ENCODE measurements at regions of chr3 and their contacts with region 1.

Region 1: DNA sequence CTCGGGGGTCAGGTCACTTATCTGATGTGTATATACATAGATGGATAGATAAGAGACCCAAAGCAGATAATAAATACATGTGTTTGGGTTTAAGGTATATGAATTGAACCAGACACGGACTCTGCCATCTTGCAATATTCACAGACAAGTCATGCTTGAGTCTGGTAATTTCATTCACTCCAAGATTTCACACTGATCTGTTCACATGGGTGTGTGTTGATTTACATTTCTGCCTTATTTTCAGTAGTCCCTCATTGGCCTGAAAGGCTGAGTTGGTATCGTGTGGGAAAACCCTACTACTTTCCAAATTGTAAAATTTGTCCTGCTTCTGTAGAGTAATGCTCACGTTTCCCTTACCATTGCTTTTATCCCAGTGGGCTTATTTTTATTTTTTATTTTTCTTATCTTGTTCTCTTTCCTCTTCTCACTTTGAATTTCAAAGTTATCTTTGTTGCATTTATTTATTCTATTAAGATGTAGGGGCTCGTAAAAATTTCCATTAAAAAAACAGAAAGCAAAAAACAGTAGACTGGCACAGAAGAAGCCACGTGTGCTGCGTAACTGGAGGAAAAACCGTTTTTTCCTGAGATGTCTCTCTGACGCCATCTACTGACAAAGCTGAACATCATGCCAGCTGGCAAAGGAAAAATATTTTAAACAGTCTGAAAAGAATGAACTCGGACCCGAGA is 10.8 kb upstream of the MFSD1 start:
- DNase-seq: no peak
- H3K4me3 ChIP-seq: peak overlapping the region in 3 of 4 donors; percentile 5 to 20 (median 9)
- H3K27ac ChIP-seq: no peak overlapping the region
- H3K4me1 ChIP-seq: peaks cover 0 to 6% (median 2%) of the 10 kb centered on the region in 4 donors
- H3K27me3 ChIP-seq: no peaks in the 10 kb centered on the region
- CTCF ChIP-seq: peak; percentile 47 to 80 (median 54)
- EP300 ChIP-seq: no peak
- POLR2A ChIP-seq: no peak

Region 2: GRCh38 chr3:158659454-158660237 is 131.4 kb before region 1 on chr3:
- intact Hi-C with region 1: loop called (anchors 5 kb)
- DNase-seq: peak; percentile 66
- H3K4me3 ChIP-seq: no peak overlapping the region
- H3K27ac ChIP-seq: peak overlapping the region in 1 of 4 donors; percentile 23
- H3K4me1 ChIP-seq: no peaks in the 10 kb centered on the region
- H3K27me3 ChIP-seq: no peaks in the 10 kb centered on the region
- CTCF ChIP-seq: peak; percentile 21 to 60 (median 42)
- EP300 ChIP-seq: no peak
- POLR2A ChIP-seq: no peak

Region 3: DNA sequence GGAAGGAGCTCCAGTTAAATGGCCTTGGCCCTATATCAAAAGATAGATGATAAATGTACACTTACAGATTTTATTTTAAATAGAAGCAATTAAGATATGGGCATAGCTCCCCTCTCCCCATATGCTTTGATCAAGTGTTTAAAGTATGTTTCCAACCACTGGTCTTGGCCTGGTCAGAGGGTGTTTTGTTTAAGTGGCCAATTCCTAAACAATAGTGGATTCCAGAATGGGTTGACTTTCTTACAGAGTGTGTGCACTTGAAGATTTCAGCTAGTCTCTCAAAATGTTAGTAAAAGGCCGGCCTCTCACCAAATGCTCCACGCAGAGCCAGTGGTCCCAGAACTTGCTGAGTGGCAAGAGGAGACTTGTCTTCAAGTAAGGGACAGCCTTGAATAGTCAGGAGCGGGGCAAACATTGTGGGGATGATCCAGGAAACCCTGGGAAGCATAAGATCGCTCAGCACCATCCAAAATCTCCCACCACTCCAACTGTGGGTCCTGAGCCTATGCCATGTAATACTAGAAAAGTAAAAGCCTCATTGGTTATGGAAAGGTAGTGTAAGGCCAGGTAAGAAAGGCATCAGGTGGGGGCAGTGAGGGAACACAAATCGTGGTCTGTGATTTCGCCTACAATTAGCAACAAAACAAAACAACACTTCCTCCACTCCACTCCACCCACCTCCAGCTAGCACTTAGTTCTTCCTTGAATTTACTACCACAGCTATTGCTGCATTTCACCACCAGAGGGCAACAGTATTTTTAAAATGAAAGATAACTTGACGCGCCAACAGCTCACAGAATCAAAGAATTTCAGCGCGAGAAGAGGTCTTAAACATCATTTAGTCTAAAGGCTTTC is 63.6 kb before region 1 on chr3:
- intact Hi-C with region 1: loop called (anchors 1 kb)
- DNase-seq: peak; percentile 75
- H3K4me3 ChIP-seq: no peak overlapping the region
- H3K27ac ChIP-seq: peak overlapping the region; percentile 40 to 73 (median 62)
- H3K4me1 ChIP-seq: peaks cover 0 to 73% (median 60%) of the 10 kb centered on the region in 4 donors
- H3K27me3 ChIP-seq: no peaks in the 10 kb centered on the region
- CTCF ChIP-seq: peak; percentile 79 to 95 (median 84)
- EP300 ChIP-seq: no peak
- POLR2A ChIP-seq: no peak

Measured in sigmoid colon (tissue), 7 donors.